Activated CD4-positive, alpha-beta T cell treated with anti-CD3 and anti-CD28 coated beads, Interleukin-2, amount 10 ng/mL, durations not matched to agents 24 days and 14 days (primary cell): ENCODE measurements at regions of chr2 and their contacts with region 1.

Region 1: DNA sequence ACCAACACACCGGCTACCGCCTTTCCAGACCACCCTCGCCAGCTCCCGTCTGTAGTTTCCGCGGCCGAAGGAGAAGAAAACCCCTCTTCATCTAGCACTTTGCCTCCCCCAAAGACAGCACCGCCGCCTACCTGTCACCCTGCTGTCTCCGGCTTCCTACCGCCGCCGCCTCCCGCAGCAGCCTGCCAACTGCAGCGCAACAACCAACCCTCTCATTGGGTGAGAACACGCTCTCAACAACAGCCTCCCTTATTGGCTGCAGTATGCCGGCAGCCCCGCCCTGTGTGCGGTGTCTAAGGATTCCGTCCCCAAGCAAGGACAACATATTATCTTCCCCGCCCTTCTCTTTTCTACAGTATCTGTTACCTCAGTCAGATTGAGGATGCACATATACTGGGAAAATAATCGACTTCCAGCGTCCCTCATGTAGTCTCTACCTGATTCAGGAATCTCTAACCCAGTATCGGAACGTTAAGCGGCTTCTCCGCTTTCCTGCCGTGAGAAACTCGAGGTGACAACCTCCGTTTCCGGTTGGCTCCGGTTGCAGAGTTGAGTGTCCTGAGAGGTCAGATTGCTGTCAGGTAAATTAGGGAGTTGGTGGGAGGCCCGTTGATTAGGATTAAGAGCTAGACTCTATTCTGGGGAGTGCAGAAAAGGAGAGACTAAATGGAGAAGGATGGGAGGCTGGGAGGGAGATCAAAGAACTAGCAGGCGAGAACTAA is at the starts of genes HYCC2 and NDUFB3:
- DNase-seq: peak; percentile 98
- H3K4me3 Mint-ChIP-seq: peak within 1 kb of the TSS; percentile 92
- H3K27ac Mint-ChIP-seq: peak within 1 kb of the TSS; percentile 91
- H3K4me1 Mint-ChIP-seq: peaks cover 37% of the 10 kb centered on the region
- H3K27me3 Mint-ChIP-seq: no peaks in the 10 kb centered on the region
- total RNA-seq, gene HYCC2: 24.4 and 26.2 TPM in 2 replicates
- total RNA-seq, gene NDUFB3: 112 and 113 TPM in 2 replicates

Region 2: DNA sequence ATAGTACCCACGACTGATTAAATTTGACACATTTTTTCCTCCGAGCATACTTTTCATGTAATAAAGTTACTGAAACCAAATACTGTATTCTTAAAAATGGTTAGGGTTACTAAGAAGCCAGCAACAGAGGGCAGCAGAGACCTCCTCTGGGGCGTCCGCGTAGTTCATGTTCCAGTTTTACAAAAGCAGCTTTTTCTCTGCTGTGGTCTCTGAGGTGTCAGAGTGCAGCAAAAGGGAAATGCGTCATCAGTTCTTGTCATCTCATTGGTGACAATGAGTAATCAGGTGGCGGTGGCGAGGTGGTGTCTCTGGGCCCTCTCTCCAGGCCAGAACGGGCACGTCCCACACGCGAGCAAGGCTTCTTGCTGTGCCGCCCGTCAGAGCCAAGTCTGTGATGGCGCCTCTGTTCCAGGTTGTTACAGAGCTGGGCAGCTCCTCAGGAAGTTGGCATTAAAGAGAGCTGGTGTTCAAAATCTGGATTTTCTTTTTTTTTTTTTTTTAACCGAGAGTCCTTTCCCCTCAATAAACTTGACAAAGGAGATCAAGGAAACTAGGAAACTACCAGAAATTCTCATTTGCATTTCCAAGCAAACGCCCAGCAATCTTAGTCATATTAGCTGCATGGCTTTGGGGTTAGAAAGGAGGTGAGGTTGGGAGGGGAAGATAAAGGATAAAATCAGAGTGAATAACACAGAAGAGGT is 358.5 kb before region 1 on chr2:
- intact Hi-C with region 1: loop called (anchors 1 kb)
- DNase-seq: peak; percentile 97
- H3K4me3 Mint-ChIP-seq: peak overlapping the region; percentile 74
- H3K27ac Mint-ChIP-seq: peak overlapping the region; percentile 99
- H3K4me1 Mint-ChIP-seq: peaks cover 29% of the 10 kb centered on the region
- H3K27me3 Mint-ChIP-seq: no peaks in the 10 kb centered on the region

Region 3: GRCh38 chr2:200888704-200889625 is 182.7 kb before region 1 on chr2 and contains the starts of genes NIF3L1 and PPIL3:
- intact Hi-C with region 1: loop called (anchors 1 kb)
- DNase-seq: peak; percentile 99
- H3K4me3 Mint-ChIP-seq: peak within 1 kb of the TSS; percentile 92
- H3K27ac Mint-ChIP-seq: peak within 1 kb of the TSS; percentile 99
- H3K4me1 Mint-ChIP-seq: peaks cover 46% of the 10 kb centered on the region
- H3K27me3 Mint-ChIP-seq: no peaks in the 10 kb centered on the region
- total RNA-seq, gene NIF3L1: 30.7 and 33.4 TPM in 2 replicates
- total RNA-seq, gene PPIL3: 52.6 and 52.8 TPM in 2 replicates

Region 4: GRCh38 chr2:200963124-200963917 is 108.3 kb before region 1 on chr2 and contains the start of gene ORC2:
- intact Hi-C with region 1: loop called (anchors 1 kb)
- DNase-seq: peak; percentile 99
- H3K4me3 Mint-ChIP-seq: peak within 1 kb of the TSS; percentile 90
- H3K27ac Mint-ChIP-seq: peak within 1 kb of the TSS; percentile 96
- H3K4me1 Mint-ChIP-seq: peaks cover 45% of the 10 kb centered on the region
- H3K27me3 Mint-ChIP-seq: no peaks in the 10 kb centered on the region
- total RNA-seq, gene ORC2: 64.2 and 66.5 TPM in 2 replicates

Region 5: GRCh38 chr2:201130524-201131186 is 59.0 kb after region 1 on chr2:
- intact Hi-C with region 1: loop called (anchors 2 kb)
- DNase-seq: peak; percentile 80
- H3K4me3 Mint-ChIP-seq: peak overlapping the region; percentile 81
- H3K27ac Mint-ChIP-seq: peak overlapping the region; percentile 100
- H3K4me1 Mint-ChIP-seq: peaks cover 51% of the 10 kb centered on the region
- H3K27me3 Mint-ChIP-seq: no peaks in the 10 kb centered on the region

Region 6: DNA sequence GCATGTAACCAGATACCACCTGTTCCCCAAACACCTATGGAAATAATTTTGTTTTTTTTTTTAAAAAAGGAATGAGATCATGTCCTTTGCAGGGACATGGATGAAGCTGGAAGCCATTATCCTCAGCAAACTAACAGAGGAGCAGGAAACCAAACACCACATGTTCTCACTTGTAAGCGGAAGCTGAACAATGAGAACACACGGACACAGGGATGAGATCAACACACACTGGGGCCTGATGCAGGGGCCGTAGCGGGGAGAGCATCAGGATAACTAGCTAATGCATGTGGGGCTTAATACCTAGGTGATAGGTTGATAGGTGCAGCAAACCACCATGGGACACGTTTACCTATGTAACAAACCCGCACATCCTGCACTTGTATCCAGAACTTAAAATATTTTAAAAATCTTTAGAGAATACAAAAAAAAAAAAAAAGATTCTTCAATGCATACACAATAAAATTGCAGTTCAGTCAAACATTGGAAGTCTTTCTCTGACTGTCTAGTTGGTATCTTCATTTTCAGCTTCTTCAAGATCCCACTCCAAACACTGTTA is 99.7 kb after region 1 on chr2:
- intact Hi-C with region 1: loop called (anchors 5 kb)
- DNase-seq: no peak
- H3K4me3 Mint-ChIP-seq: no peak overlapping the region
- H3K27ac Mint-ChIP-seq: no peak overlapping the region
- H3K4me1 Mint-ChIP-seq: peaks cover 7% of the 10 kb centered on the region
- H3K27me3 Mint-ChIP-seq: no peaks in the 10 kb centered on the region

Region 7: DNA sequence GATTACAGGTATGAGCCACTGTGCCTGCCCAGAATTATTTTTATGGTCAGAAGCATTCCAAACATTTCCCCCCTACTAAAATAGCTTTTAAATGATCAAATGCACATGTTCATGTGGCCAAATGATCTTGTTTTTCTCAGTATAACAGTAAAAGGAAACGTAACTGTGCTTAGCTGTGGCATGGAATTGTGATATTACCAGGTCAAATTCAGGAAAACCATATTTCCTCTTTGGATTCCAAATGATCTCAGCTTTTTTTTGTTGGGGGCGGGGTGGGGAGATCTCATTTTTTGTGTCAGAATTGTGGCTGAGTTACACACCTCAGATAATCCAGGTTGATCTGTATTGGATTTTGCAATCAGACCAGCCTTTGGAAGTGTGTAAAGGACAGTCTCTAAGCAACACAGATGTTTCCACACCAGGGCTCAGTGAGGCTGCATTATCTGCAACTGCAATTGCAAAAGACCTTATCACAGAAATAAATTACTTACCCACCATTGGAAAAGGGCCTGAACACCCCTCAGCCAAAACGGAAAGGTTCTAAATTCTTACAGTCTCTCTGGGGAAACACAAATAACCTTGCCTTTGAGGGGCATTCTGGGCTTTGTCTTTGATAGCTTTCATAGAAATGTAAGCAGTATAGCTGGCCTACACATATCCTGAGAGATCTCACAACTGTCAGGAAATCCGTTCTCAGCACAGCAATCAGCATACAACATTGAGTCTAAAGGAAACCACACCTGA is 119.7 kb after region 1 on chr2:
- intact Hi-C with region 1: no loop called
- DNase-seq: peak; percentile 76
- H3K4me3 Mint-ChIP-seq: peak overlapping the region; percentile 60
- H3K27ac Mint-ChIP-seq: peak overlapping the region; percentile 56
- H3K4me1 Mint-ChIP-seq: peaks cover 57% of the 10 kb centered on the region
- H3K27me3 Mint-ChIP-seq: no peaks in the 10 kb centered on the region